Mammary epithelial cell (primary cell): ENCODE measurements at regions of chr18 and their contacts with region 1.

Region 1: GRCh38 chr18:76259096-76259495 is 235.9 kb downstream of the ZNF516 start:
- DNase-seq: no peak
- H3K4me3 ChIP-seq: no peak overlapping the region
- H3K27ac ChIP-seq: no peak overlapping the region
- H3K4me1 ChIP-seq: peaks cover 9% of the 10 kb centered on the region
- H3K27me3 ChIP-seq: no peaks in the 10 kb centered on the region
- CTCF ChIP-seq: no peak

Region 2: DNA sequence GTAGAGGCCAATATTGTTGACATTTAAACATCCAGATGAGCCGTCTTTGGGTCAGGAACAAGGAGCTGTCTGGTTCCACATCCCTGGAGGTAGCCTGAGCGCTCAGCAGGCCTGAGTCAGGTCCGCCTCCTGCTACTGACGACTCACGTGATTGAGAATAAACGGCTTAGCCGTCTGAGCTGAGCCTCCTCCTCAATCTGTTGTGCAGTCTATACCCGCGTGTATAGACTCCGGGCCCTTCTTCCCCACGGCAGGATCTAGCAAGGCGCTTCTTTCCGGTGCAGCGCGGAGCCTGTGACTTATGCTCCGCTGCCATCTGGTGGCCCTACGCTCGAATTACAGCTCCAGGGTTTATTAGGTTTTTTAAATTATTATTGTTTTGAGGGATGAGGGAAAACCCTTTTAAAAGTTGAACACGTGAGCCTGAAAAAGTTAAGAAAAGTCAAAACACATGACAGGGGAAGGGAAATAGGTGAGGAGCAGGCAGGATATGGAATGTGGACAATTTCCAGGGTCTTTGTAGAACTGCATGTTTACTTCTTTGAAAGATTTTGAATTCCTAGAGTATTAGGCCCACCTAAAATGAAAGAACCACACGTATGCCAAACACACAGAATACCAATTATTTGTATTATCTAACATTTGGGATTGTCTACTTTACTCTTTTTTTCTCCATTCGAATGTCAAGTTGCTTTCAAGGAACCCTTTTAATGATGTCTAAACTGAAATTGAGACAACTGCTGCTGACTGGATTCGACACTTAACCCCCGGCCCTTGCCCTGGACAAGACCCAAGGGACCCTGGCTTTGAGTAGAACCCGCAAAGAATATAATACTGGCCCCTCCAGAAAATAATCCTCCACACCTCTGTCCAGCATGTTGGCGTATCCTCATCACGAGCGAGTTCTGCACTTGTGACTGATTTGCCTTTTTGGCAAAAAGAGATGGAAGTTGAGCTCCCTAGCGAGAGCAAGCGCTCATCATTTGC is 450.9 kb after region 1 on chr18:
- CTCF ChIA-PET with region 1: no interaction called
- dilution Hi-C with region 1: no loop called
- in situ Hi-C with region 1: no loop called
- intact Hi-C with region 1: loop called (anchors 5 kb)
- DNase-seq: peak; percentile 36
- H3K4me3 ChIP-seq: no peak overlapping the region
- H3K27ac ChIP-seq: no peak overlapping the region
- H3K4me1 ChIP-seq: no peaks in the 10 kb centered on the region
- H3K27me3 ChIP-seq: no peaks in the 10 kb centered on the region
- CTCF ChIP-seq: peak; percentile 86 to 91